ENCODE measurements at regions of chr3 and their contacts with region 1.

Region 1: GRCh38 chr3:196388956-196389355 is 43.3 kb downstream of the UBXN7 start:
- DNase-seq: no peak
- H3K4me3 ChIP-seq: no peak overlapping the region
- H3K27ac ChIP-seq: no peak overlapping the region
- H3K4me1 ChIP-seq: no peaks in the 10 kb centered on the region
- H3K27me3 ChIP-seq: no peaks in the 10 kb centered on the region
- CTCF ChIP-seq: no peak

Region 2: GRCh38 chr3:196378146-196378841 is 10.7 kb before region 1 on chr3:
- CTCF ChIA-PET with region 1: interaction called, 11 read pairs
- POLR2A ChIA-PET with region 1: no interaction called
- intact Hi-C with region 1: no loop called
- DNase-seq: peak in 1 of 2 experiments; percentile 10
- H3K4me3 ChIP-seq: no peak overlapping the region
- H3K27ac ChIP-seq: no peak overlapping the region
- H3K4me1 ChIP-seq: no peaks in the 10 kb centered on the region
- H3K27me3 ChIP-seq: no peaks in the 10 kb centered on the region
- CTCF ChIP-seq: no peak

Region 3: GRCh38 chr3:196432137-196432879 is 43.4 kb after region 1 on chr3 and contains the start of gene UBXN7:
- CTCF ChIA-PET with region 1: interaction called, 12 read pairs
- POLR2A ChIA-PET with region 1: no interaction called
- intact Hi-C with region 1: no loop called
- DNase-seq: peak; percentile 82 to 98
- H3K4me3 ChIP-seq: peak within 1 kb of the TSS; percentile 80
- H3K27ac ChIP-seq: peak within 1 kb of the TSS; percentile 47
- H3K4me1 ChIP-seq: peaks cover 13% of the 10 kb centered on the region
- H3K27me3 ChIP-seq: no peaks in the 10 kb centered on the region
- CTCF ChIP-seq: no peak
- total RNA-seq, gene UBXN7: 68.6 and 125 TPM in 2 replicates